Caco-2 (cell line): ENCODE measurements at regions of chr9 and their contacts with region 1.

Region 1: DNA sequence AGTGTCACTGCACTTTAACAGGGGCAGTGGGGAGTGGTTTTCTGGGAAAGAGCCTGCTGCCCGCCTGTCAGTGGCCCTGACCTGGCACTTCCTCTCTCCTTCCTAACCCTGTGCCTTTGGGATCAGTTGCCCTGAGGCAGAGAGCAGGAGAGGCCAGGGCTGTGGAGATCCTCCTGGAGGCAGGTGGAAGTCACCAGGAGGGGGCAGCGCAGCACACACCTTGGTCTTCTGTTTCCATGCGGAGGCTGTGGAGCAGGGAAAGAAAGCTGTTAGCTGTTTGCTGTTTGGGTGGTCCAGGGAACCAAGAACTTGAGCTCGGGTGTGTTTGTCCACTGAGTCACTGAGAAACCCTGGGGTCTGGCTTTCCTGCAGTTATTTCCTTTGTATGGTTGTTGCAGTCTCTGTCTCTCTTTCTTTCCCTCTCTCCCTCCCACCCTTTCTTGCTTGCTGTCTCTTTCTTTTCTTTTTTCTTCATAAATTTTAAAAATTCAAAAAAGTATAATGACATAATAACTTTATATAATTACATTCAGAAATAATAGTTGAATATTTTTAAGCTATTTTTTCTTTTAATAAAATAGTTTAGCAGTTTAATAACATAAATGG is 28.1 kb downstream of the NTRK2 start:
- DNase-seq: peak; percentile 50 to 51
- H3K4me3 ChIP-seq: no peak overlapping the region
- H3K4me3 Mint-ChIP-seq: no peak overlapping the region
- H3K27ac Mint-ChIP-seq: no peak overlapping the region
- H3K4me1 ChIP-seq: no peaks in the 10 kb centered on the region
- H3K4me1 Mint-ChIP-seq: no peaks in the 10 kb centered on the region
- H3K27me3 ChIP-seq: no peaks in the 10 kb centered on the region
- H3K27me3 Mint-ChIP-seq: peaks cover 5% of the 10 kb centered on the region
- CTCF ChIP-seq: peak; percentile 38 to 47

Region 2: GRCh38 chr9:84447305-84447704 is 250.3 kb before region 1 on chr9:
- CTCF ChIA-PET with region 1: no interaction called
- POLR2A ChIA-PET with region 1: no interaction called
- intact Hi-C with region 1: no loop called
- DNase-seq: no peak
- H3K4me3 ChIP-seq: no peak overlapping the region
- H3K4me3 Mint-ChIP-seq: no peak overlapping the region
- H3K27ac Mint-ChIP-seq: no peak overlapping the region
- H3K4me1 ChIP-seq: no peaks in the 10 kb centered on the region
- H3K4me1 Mint-ChIP-seq: no peaks in the 10 kb centered on the region
- H3K27me3 ChIP-seq: no peaks in the 10 kb centered on the region
- H3K27me3 Mint-ChIP-seq: peaks cover 4% of the 10 kb centered on the region
- CTCF ChIP-seq: no peak

Region 3: DNA sequence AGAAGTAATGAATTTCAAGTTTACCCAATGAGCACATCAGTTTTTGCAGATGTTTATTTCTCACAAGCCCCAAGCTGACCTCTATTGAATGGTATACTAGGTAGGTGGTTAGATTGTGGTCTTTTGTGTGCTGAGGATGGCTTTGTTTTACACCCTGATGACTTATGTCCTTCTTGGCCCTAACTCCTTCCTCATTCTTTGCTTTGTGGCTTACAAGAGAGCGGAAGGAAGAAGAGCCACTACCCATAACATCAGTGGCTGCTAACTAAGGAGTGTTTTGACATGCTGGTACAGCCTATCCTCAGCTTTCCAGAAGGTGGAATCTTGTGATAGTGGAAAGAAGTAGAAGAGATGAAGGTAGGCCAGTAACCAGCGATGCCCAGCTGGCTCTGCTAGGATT is 113.7 kb before region 1 on chr9:
- CTCF ChIA-PET with region 1: no interaction called
- POLR2A ChIA-PET with region 1: no interaction called
- intact Hi-C with region 1: no loop called
- DNase-seq: no peak
- H3K4me3 ChIP-seq: no peak overlapping the region
- H3K4me3 Mint-ChIP-seq: no peak overlapping the region
- H3K27ac Mint-ChIP-seq: no peak overlapping the region
- H3K4me1 ChIP-seq: no peaks in the 10 kb centered on the region
- H3K4me1 Mint-ChIP-seq: no peaks in the 10 kb centered on the region
- H3K27me3 ChIP-seq: no peaks in the 10 kb centered on the region
- H3K27me3 Mint-ChIP-seq: peaks cover 7% of the 10 kb centered on the region
- CTCF ChIP-seq: no peak

Region 4: DNA sequence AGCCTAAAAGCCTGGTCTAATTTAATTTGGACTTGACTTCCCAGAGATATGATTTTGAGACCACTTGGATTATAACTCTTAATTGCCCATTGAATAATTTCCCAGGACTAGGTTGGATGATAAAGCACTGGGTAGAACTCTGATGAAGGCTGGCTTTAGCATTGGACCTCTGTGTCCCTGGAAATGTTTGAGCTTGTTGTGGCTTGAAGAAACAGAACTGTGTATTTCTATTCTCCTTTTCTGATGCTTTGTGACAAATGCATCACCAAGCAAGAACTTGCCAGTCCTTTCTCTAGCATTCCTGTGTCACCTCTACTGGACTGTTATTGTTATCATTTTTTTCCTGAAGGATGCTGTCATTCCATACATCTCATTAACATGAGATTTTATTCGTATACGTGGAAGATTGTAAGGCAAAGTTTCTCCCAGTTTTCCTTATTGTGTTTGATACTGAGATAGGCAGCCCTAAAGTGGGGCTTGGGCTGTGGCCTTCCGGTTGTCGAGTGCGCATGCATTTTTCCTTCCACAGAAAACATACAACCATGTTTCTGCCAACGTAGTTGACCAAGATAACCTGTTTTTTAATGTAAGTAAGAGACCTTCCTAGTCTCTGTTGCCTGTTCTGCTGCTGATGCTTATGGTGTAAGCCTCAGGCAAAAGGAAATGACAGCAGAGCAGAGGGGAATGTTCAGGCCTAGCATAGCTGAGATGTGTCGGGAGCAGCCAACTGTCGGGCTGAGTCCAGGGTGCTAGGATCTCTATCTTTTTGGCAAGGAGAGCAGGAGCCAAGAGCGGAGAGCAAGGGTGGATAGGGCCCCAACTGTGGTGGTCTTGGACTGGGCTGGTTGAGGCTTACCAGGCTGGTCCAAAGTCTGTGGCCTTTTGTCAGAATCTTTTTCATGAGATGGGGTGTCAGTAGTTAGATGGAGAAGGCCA is 25.8 kb before region 1 on chr9:
- CTCF ChIA-PET with region 1: no interaction called
- POLR2A ChIA-PET with region 1: no interaction called
- intact Hi-C with region 1: no loop called
- DNase-seq: no peak
- H3K4me3 ChIP-seq: no peak overlapping the region
- H3K4me3 Mint-ChIP-seq: no peak overlapping the region
- H3K27ac Mint-ChIP-seq: no peak overlapping the region
- H3K4me1 ChIP-seq: no peaks in the 10 kb centered on the region
- H3K4me1 Mint-ChIP-seq: no peaks in the 10 kb centered on the region
- H3K27me3 ChIP-seq: no peaks in the 10 kb centered on the region
- H3K27me3 Mint-ChIP-seq: peaks cover 15% of the 10 kb centered on the region
- CTCF ChIP-seq: no peak

Region 5: GRCh38 chr9:84781458-84781857 is 83.8 kb after region 1 on chr9:
- CTCF ChIA-PET with region 1: no interaction called
- POLR2A ChIA-PET with region 1: no interaction called
- intact Hi-C with region 1: loop called (anchors 10 kb)
- DNase-seq: peak in 1 of 2 experiments; percentile 3
- H3K4me3 ChIP-seq: no peak overlapping the region
- H3K4me3 Mint-ChIP-seq: no peak overlapping the region
- H3K27ac Mint-ChIP-seq: no peak overlapping the region
- H3K4me1 ChIP-seq: no peaks in the 10 kb centered on the region
- H3K4me1 Mint-ChIP-seq: no peaks in the 10 kb centered on the region
- H3K27me3 ChIP-seq: no peaks in the 10 kb centered on the region
- H3K27me3 Mint-ChIP-seq: peaks cover 6% of the 10 kb centered on the region
- CTCF ChIP-seq: peak in 1 of 2 experiments; percentile 25

Region 6: DNA sequence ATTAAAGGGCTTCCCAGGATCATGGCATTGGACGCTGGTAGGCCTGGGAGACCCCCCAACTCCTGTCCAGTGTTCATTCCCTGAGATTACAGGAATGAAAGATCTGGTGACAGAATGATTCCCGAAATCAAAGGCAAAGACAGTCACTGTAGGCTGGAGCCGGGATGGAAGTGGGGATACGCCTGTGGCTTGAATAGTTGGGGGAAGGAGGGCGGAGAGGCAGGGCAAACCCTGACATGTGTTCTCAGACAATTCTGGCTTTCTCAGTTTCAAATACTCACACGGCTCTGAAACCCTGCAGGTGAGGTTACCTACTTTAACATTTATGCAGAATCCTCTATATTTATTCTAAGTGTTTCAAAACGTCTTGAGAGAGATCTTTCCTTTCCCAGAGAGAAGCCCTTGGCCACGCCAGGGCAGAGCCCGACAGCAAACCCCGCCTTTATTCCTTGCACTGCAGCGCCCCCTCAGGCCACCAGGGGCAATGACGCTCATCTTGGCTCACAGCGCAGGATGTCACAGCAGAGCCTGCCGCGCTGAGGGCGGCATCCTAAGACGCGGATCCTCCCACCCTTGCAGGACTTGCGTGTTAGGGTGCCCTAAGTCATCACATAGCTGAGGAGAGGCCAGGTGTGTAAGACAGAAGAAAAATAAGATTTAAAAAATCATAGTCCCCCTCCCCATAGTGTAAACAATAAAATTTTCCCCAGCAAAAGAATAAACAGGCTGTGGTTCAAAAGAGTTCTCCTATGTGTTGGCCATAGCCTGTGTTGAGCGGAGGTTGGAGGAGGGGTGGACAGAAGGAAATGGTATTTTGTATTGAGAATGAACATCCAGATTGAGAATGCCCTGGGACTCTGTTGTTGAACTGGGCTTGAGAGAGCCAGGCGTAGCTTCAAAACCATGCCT is 256.4 kb after region 1 on chr9:
- CTCF ChIA-PET with region 1: no interaction called
- POLR2A ChIA-PET with region 1: no interaction called
- intact Hi-C with region 1: loop called (anchors 1 kb)
- DNase-seq: peak; percentile 41 to 44
- H3K4me3 ChIP-seq: no peak overlapping the region
- H3K4me3 Mint-ChIP-seq: no peak overlapping the region
- H3K27ac Mint-ChIP-seq: no peak overlapping the region
- H3K4me1 ChIP-seq: no peaks in the 10 kb centered on the region
- H3K4me1 Mint-ChIP-seq: no peaks in the 10 kb centered on the region
- H3K27me3 ChIP-seq: no peaks in the 10 kb centered on the region
- H3K27me3 Mint-ChIP-seq: peaks cover 2% of the 10 kb centered on the region
- CTCF ChIP-seq: peak; percentile 47 to 57

Region 7: GRCh38 chr9:85258823-85259370 is 561.3 kb after region 1 on chr9:
- CTCF ChIA-PET with region 1: interaction called, 3 read pairs
- POLR2A ChIA-PET with region 1: no interaction called
- intact Hi-C with region 1: loop called (anchors 2 kb)
- DNase-seq: peak; percentile 42 to 45
- H3K4me3 ChIP-seq: no peak overlapping the region
- H3K4me3 Mint-ChIP-seq: no peak overlapping the region
- H3K27ac Mint-ChIP-seq: no peak overlapping the region
- H3K4me1 ChIP-seq: no peaks in the 10 kb centered on the region
- H3K4me1 Mint-ChIP-seq: peaks cover 6% of the 10 kb centered on the region
- H3K27me3 ChIP-seq: no peaks in the 10 kb centered on the region
- H3K27me3 Mint-ChIP-seq: peaks cover 12% of the 10 kb centered on the region
- CTCF ChIP-seq: peak; percentile 47 to 60